CD8-positive, alpha-beta T cell (primary cell): ENCODE measurements at regions of chr17 and their contacts with region 1.

Region 1: GRCh38 chr17:76753061-76753961 is 15.4 kb downstream of the MFSD11 start:
- DNase-seq: peak in 6 of 9 experiments; percentile 16 to 87 (median 58)
- ATAC-seq: peak; percentile 82
- H3K4me3 ChIP-seq: peak overlapping the region; percentile 40 to 54
- H3K4me3 Mint-ChIP-seq: peak overlapping the region; percentile 84
- H3K27ac ChIP-seq: peak overlapping the region; percentile 86 to 93
- H3K27ac Mint-ChIP-seq: peak overlapping the region; percentile 98
- H3K4me1 ChIP-seq: peaks cover 20% of the 10 kb centered on the region
- H3K4me1 Mint-ChIP-seq: peaks cover 23% of the 10 kb centered on the region
- H3K27me3 ChIP-seq: no peaks in the 10 kb centered on the region
- H3K27me3 Mint-ChIP-seq: no peaks in the 10 kb centered on the region
- CTCF ChIP-seq: no peak

Region 2: GRCh38 chr17:76772842-76773525 is 19.7 kb after region 1 on chr17:
- CTCF ChIA-PET with region 1: no interaction called
- POLR2A ChIA-PET with region 1: interaction called, 5 read pairs
- intact Hi-C with region 1: loop called in 1 of 2 experiments (anchors 1 kb)
- DNase-seq: peak in 8 of 9 experiments; percentile 32 to 89 (median 62)
- ATAC-seq: peak; percentile 88
- H3K4me3 ChIP-seq: peak overlapping the region; percentile 30 to 39
- H3K4me3 Mint-ChIP-seq: peak overlapping the region; percentile 70
- H3K27ac ChIP-seq: peak overlapping the region; percentile 60 to 87
- H3K27ac Mint-ChIP-seq: peak overlapping the region; percentile 97
- H3K4me1 ChIP-seq: peaks cover 11% of the 10 kb centered on the region
- H3K4me1 Mint-ChIP-seq: peaks cover 20% of the 10 kb centered on the region
- H3K27me3 ChIP-seq: no peaks in the 10 kb centered on the region
- H3K27me3 Mint-ChIP-seq: no peaks in the 10 kb centered on the region
- CTCF ChIP-seq: no peak